CD14-positive monocyte (primary cell): ENCODE measurements at regions of chr5 and their contacts with region 1.

Region 1: GRCh38 chr5:154405078-154405792 is 40.6 kb upstream of the SAP30L start:
- DNase-seq: peak; percentile 38 to 51 (median 46)
- H3K4me3 ChIP-seq: peak overlapping the region in 1 of 3 experiments; percentile 44
- H3K4me3 Mint-ChIP-seq: peak overlapping the region; percentile 66 to 90
- H3K27ac ChIP-seq: no peak overlapping the region
- H3K27ac Mint-ChIP-seq: no peak overlapping the region
- H3K4me1 ChIP-seq: peaks cover 8% of the 10 kb centered on the region in 2 donors
- H3K4me1 Mint-ChIP-seq: peaks cover 8% of the 10 kb centered on the region
- H3K27me3 ChIP-seq: peaks cover 0 to 2% of the 10 kb centered on the region in 2 donors
- H3K27me3 Mint-ChIP-seq: peaks cover 1 to 5% (median 5%) of the 10 kb centered on the region in 3 donors
- CTCF ChIP-seq: peak; percentile 83

Region 2: DNA sequence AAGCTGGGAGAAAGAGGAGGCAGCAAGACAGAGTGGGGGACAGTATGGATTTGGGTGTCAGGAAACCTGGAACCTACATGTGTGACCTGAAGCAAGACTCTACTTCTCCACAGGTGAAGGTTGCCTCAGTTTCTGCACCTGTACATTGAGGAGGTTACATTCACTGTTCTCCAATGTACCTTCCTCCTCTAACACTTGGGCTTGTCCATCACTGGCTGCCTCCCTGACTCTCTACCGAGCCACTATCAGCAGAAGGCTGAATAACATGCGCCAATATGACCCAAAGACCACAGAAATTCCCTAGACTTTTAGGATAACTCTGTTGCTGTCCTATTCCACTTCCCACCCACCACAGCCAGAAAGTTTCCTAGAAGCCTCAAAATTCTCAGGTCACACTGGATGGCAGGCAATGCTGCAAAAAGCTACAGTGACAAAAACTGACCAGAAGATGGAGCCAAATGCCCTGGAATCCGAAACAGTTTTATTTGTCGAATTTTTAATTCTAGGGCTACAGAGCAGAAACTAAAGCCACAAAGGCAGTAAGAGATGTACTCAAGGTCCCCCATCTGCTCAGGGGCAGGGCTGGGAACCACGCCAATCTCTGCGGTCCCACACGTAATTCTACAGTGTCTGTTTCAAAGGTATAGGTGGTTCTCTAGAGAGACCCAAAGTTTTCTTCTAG is 431.0 kb before region 1 on chr5:
- intact Hi-C with region 1: loop called in 1 of 2 experiments (anchors 10 kb)
- DNase-seq: peak in 1 of 3 donors; percentile 17
- H3K4me3 ChIP-seq: no peak overlapping the region
- H3K4me3 Mint-ChIP-seq: no peak overlapping the region
- H3K27ac ChIP-seq: no peak overlapping the region
- H3K27ac Mint-ChIP-seq: no peak overlapping the region
- H3K4me1 ChIP-seq: no peaks in the 10 kb centered on the region
- H3K4me1 Mint-ChIP-seq: peaks cover 4% of the 10 kb centered on the region
- H3K27me3 ChIP-seq: no peaks in the 10 kb centered on the region
- H3K27me3 Mint-ChIP-seq: peaks cover 3 to 5% (median 3%) of the 10 kb centered on the region in 3 donors
- CTCF ChIP-seq: peak; percentile 71

Region 3: DNA sequence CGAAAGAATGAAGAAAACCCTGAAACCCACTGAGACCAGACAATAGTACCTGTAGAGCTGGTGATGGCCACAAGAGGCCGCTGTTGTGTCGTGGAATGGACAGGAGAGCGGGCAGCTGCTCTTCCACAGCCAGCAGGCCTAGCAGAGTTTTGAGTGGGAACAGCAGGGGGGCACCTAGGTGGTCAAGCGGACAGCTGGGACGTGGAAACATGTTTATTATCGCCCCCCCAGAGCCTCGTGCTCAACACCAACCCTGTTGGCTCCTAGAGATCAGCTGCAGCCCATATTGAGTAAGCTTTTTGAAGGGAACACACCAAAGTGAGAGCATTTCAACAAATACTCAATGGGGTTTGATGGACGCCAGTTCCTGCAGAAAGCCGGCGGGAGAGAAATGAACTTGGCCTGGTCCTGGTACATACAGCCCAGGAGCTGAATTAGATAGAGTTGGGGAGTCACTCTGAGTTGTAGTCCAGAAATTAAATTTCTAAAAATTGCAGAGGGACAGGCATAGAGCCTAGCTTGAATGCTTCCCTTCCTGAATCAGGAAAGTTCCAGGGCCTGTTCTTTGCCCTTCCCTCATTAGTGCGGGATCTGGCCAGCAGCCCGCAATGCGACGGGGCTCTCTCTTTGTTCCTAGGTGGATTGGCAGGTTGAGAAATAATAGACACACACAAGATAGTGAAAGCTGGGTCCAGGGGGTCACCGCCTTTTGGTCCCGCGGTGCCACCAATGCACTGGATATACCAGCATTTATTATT is 332.6 kb before region 1 on chr5:
- intact Hi-C with region 1: loop called (anchors 5 kb)
- DNase-seq: peak; percentile 59 to 68 (median 67)
- H3K4me3 ChIP-seq: no peak overlapping the region
- H3K4me3 Mint-ChIP-seq: peak overlapping the region; percentile 32 to 54
- H3K27ac ChIP-seq: no peak overlapping the region
- H3K27ac Mint-ChIP-seq: no peak overlapping the region
- H3K4me1 ChIP-seq: peaks cover 4 to 13% of the 10 kb centered on the region in 2 donors
- H3K4me1 Mint-ChIP-seq: peaks cover 14% of the 10 kb centered on the region
- H3K27me3 ChIP-seq: no peaks in the 10 kb centered on the region
- H3K27me3 Mint-ChIP-seq: peaks cover 4 to 17% (median 8%) of the 10 kb centered on the region in 3 donors
- CTCF ChIP-seq: peak; percentile 87

Region 4: DNA sequence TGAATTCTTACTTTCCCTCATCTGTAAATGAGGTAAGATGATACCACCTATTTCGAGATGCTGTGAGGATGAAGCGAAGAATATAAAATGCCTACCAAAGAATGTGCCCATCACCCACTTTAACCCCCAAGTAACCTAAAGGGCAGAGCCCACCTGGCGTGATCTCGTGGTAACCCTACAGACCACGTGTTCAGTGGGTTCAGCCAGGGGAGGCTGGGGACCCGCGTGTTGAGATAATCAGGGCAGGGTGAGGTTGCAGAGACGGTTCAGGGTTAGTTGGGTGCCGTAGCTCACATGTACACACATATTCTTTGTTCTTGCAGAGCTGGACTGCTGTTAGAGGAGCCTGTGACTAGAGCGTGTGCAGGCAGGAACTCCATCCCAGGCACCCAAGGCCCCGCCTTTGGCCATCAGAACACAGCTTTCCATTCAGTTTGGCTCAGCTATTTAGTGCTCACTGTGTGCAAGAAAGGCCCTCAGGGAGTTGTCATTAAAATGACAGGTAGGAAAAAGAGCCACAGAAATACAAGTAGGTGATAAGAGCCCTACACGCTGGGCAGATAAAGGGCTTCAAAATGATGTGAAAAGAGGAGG is 129.3 kb after region 1 on chr5:
- intact Hi-C with region 1: no loop called
- DNase-seq: no peak
- H3K4me3 ChIP-seq: no peak overlapping the region
- H3K4me3 Mint-ChIP-seq: no peak overlapping the region
- H3K27ac ChIP-seq: no peak overlapping the region
- H3K27ac Mint-ChIP-seq: no peak overlapping the region
- H3K4me1 ChIP-seq: no peaks in the 10 kb centered on the region
- H3K4me1 Mint-ChIP-seq: no peaks in the 10 kb centered on the region
- H3K27me3 ChIP-seq: no peaks in the 10 kb centered on the region
- H3K27me3 Mint-ChIP-seq: peaks cover 8 to 12% (median 10%) of the 10 kb centered on the region in 3 donors
- CTCF ChIP-seq: no peak

Region 5: DNA sequence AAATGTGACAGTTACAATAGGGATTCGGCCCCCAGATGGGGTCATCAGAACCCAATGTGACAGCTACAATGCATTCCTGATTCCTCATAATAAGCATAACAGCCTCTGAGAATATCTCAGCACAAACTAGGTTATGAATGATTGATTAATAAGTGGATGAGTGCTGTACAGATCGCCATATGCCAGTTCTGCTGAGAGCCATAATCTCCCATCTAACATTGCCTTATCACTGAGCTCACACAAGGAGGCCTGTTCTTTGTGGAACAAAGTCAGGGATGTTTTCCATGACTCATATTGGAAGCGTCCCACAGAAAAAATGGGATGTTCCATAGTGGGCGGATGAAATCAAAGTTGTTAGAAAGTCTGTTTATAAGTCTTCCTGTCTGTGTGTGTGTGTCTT is 697.9 kb after region 1 on chr5:
- intact Hi-C with region 1: no loop called
- DNase-seq: no peak
- H3K4me3 ChIP-seq: no peak overlapping the region
- H3K4me3 Mint-ChIP-seq: no peak overlapping the region
- H3K27ac ChIP-seq: no peak overlapping the region
- H3K27ac Mint-ChIP-seq: no peak overlapping the region
- H3K4me1 ChIP-seq: no peaks in the 10 kb centered on the region
- H3K4me1 Mint-ChIP-seq: no peaks in the 10 kb centered on the region
- H3K27me3 ChIP-seq: no peaks in the 10 kb centered on the region
- H3K27me3 Mint-ChIP-seq: peaks cover 0 to 4% (median 2%) of the 10 kb centered on the region in 3 donors
- CTCF ChIP-seq: no peak